Activated CD4-positive, alpha-beta memory T cell treated with anti-CD3 and anti-CD28 coated beads for 36 hours (primary cell): ENCODE measurements at regions of chr17 and their contacts with region 1.

Region 1: GRCh38 chr17:409848-410545 is 57.4 kb upstream of the RPH3AL start:
- DNase-seq: peak; percentile 100
- H3K4me3 Mint-ChIP-seq: peak overlapping the region; percentile 87
- H3K27ac Mint-ChIP-seq: peak overlapping the region; percentile 93
- H3K4me1 Mint-ChIP-seq: peaks cover 65% of the 10 kb centered on the region
- H3K27me3 Mint-ChIP-seq: peaks cover 5% of the 10 kb centered on the region

Region 2: GRCh38 chr17:320809-321653 is 89.0 kb before region 1 on chr17:
- CTCF ChIA-PET with region 1: no interaction called
- POLR2A ChIA-PET with region 1: no interaction called
- intact Hi-C with region 1: no loop called
- DNase-seq: no peak
- H3K4me3 Mint-ChIP-seq: no peak overlapping the region
- H3K27ac Mint-ChIP-seq: no peak overlapping the region
- H3K4me1 Mint-ChIP-seq: no peaks in the 10 kb centered on the region
- H3K27me3 Mint-ChIP-seq: no peaks in the 10 kb centered on the region

Region 3: GRCh38 chr17:333626-334396 is 76.2 kb before region 1 on chr17:
- CTCF ChIA-PET with region 1: no interaction called
- POLR2A ChIA-PET with region 1: no interaction called
- intact Hi-C with region 1: no loop called
- DNase-seq: no peak
- H3K4me3 Mint-ChIP-seq: no peak overlapping the region
- H3K27ac Mint-ChIP-seq: no peak overlapping the region
- H3K4me1 Mint-ChIP-seq: peaks cover 59% of the 10 kb centered on the region
- H3K27me3 Mint-ChIP-seq: peaks cover 3% of the 10 kb centered on the region

Region 4: GRCh38 chr17:393806-394717 is 15.9 kb before region 1 on chr17:
- CTCF ChIA-PET with region 1: no interaction called
- POLR2A ChIA-PET with region 1: no interaction called
- intact Hi-C with region 1: no loop called
- DNase-seq: no peak
- H3K4me3 Mint-ChIP-seq: no peak overlapping the region
- H3K27ac Mint-ChIP-seq: no peak overlapping the region
- H3K4me1 Mint-ChIP-seq: peaks cover 8% of the 10 kb centered on the region
- H3K27me3 Mint-ChIP-seq: no peaks in the 10 kb centered on the region

Region 5: DNA sequence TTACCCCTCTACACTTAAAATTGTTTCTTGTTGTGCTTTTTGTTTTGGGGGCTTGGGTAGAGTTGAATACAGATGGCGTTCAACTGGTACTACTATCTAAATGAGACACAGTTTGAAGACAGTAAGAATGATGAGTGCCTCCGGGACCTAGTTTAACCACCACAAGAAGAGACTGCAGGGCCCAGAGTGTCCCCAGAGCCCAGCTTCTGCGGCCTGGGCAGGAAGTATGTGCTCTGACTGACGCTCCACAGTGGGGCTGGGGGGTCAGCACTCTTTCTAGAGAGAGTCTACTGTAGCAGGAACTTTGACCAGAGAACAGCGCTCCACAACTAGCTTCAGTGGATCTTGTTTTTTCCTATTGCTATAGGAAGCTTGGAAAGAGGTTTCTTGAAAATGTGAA is 130.6 kb after region 1 on chr17:
- CTCF ChIA-PET with region 1: interaction called, 11 read pairs
- POLR2A ChIA-PET with region 1: no interaction called
- intact Hi-C with region 1: no loop called
- DNase-seq: no peak
- H3K4me3 Mint-ChIP-seq: no peak overlapping the region
- H3K27ac Mint-ChIP-seq: no peak overlapping the region
- H3K4me1 Mint-ChIP-seq: peaks cover 11% of the 10 kb centered on the region
- H3K27me3 Mint-ChIP-seq: no peaks in the 10 kb centered on the region

Region 6: DNA sequence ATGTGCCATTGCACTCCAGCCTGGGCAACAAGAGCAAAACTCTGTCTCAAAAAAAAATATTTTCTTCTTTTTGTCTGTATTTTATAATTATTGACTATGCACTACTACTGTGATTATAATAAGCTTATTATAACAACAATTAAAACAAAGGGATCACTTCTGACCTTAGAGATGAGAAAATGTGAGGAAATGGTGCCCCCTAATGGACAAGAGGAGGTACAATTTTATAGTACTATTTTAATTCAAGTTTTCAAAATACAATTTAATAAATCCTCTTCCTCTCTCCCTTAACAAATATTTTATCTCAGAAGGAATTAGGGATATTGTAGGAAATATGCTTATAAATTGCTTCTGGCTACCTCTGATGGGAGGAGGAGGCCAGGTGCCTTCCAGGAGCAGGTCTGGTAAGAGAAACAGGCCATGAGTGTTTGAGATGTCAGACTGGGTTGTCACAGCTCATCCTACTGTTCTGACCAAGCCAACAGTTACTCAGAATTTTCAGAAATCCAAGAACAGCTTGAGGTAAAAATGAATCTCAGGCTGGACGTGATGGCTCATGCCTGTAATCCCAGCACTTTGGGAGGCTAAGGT is 290.6 kb after region 1 on chr17:
- CTCF ChIA-PET with region 1: interaction called, 133 read pairs
- POLR2A ChIA-PET with region 1: interaction called, 5 read pairs
- intact Hi-C with region 1: loop called (anchors 1 kb)
- DNase-seq: no peak
- H3K4me3 Mint-ChIP-seq: no peak overlapping the region
- H3K27ac Mint-ChIP-seq: no peak overlapping the region
- H3K4me1 Mint-ChIP-seq: peaks cover 4% of the 10 kb centered on the region
- H3K27me3 Mint-ChIP-seq: no peaks in the 10 kb centered on the region

Region 7: GRCh38 chr17:752002-752619 is 342.1 kb after region 1 on chr17 and contains the start of gene GEMIN4:
- CTCF ChIA-PET with region 1: interaction called, 7 read pairs
- POLR2A ChIA-PET with region 1: no interaction called
- intact Hi-C with region 1: loop called (anchors 5 kb)
- DNase-seq: peak; percentile 98
- H3K4me3 Mint-ChIP-seq: peak within 1 kb of the TSS; percentile 97
- H3K27ac Mint-ChIP-seq: peak within 1 kb of the TSS; percentile 87
- H3K4me1 Mint-ChIP-seq: peaks cover 35% of the 10 kb centered on the region
- H3K27me3 Mint-ChIP-seq: no peaks in the 10 kb centered on the region
- total RNA-seq, gene GEMIN4: 38.8 to 39.6 TPM

Region 8: GRCh38 chr17:859061-859823 is 449.2 kb after region 1 on chr17:
- CTCF ChIA-PET with region 1: no interaction called
- POLR2A ChIA-PET with region 1: no interaction called
- intact Hi-C with region 1: no loop called
- DNase-seq: no peak
- H3K4me3 Mint-ChIP-seq: no peak overlapping the region
- H3K27ac Mint-ChIP-seq: no peak overlapping the region
- H3K4me1 Mint-ChIP-seq: no peaks in the 10 kb centered on the region
- H3K27me3 Mint-ChIP-seq: no peaks in the 10 kb centered on the region

Region 9: DNA sequence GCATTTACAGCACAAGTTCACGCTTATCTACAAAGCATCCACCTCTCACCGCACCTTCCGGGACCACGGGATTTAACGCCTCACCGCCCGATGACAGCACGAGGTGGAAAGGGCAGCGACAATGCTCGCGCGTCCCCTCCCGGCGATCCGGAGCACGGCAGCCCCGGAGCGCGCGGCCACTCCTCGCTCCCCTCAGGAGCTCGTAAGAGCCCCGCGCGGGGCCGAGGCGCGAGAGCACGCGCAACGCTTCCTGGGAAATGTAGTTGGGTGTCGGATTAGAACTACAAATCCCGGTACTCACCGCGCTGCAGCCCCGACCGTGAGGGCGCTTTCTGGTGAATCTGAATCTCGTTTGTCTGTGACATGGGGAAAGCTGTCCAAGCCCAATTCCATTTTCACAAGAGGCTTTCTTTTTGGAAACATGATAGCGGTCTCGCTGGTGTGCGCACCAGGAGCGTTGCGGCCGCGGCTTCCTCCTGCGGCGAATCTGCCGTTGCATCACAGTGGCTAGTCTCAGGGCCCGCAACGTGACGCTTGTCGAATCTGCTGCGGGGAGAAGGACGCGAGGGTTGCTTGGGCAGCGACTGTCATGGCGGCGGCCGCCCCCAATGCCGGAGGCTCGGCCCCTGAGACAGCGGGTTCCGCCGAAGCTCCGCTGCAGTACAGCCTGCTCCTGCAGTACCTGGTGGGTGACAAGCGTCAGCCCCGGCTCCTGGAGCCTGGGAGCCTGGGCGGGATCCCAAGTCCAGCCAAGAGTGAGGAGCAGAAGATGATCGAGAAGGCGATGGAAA is 586.8 kb after region 1 on chr17 and contains the start of gene TIMM22:
- CTCF ChIA-PET with region 1: interaction called, 5 read pairs
- POLR2A ChIA-PET with region 1: no interaction called
- intact Hi-C with region 1: loop called (anchors 5 kb)
- DNase-seq: peak; percentile 96
- H3K4me3 Mint-ChIP-seq: peak within 1 kb of the TSS; percentile 92
- H3K27ac Mint-ChIP-seq: peak within 1 kb of the TSS; percentile 97
- H3K4me1 Mint-ChIP-seq: peaks cover 22% of the 10 kb centered on the region
- H3K27me3 Mint-ChIP-seq: no peaks in the 10 kb centered on the region
- total RNA-seq, gene TIMM22: 8.0 to 9.6 TPM